CD4-positive, alpha-beta memory T cell (primary cell): ENCODE measurements at regions of chr19 and their contacts with region 1.

Region 1: GRCh38 chr19:3809881-3810707 is 23.9 kb upstream of the MATK start:
- DNase-seq: peak in 1 of 5 donors; percentile 19
- H3K4me3 ChIP-seq: no peak overlapping the region
- H3K4me3 Mint-ChIP-seq: no peak overlapping the region
- H3K27ac ChIP-seq: no peak overlapping the region
- H3K27ac Mint-ChIP-seq: peak overlapping the region in 2 of 7 donors; percentile 68 to 86
- H3K4me1 ChIP-seq: peaks cover 33% of the 10 kb centered on the region
- H3K4me1 Mint-ChIP-seq: peaks cover 26 to 50% (median 36%) of the 10 kb centered on the region in 4 donors
- H3K27me3 ChIP-seq: no peaks in the 10 kb centered on the region
- H3K27me3 Mint-ChIP-seq: no peaks in the 10 kb centered on the region

Region 2: DNA sequence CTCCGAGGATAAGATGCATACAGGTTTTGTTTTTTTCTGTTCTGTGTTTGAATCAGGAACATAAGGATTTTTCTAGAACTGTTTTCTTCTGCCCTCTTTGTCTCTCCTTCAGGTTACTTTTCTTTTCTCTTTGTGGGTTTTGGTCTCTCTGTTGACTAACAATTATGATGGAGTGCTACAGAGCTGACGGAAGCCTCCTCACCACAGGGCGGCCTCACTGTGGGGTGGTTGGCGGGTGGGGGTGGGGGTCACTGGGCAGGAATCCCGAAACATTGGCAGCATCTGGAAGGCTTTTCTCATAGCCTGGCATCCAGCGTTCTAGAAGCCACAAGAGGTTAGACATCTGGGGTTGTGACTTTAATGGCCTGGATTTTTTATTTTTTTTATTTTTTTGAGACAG is 12.0 kb before region 1 on chr19:
- CTCF ChIA-PET with region 1: interaction called, 4 read pairs
- POLR2A ChIA-PET with region 1: interaction called, 30 read pairs
- intact Hi-C with region 1: no loop called
- DNase-seq: peak; percentile 47 to 67 (median 57)
- H3K4me3 ChIP-seq: no peak overlapping the region
- H3K4me3 Mint-ChIP-seq: peak overlapping the region in 7 of 8 donors; percentile 48 to 83 (median 67)
- H3K27ac ChIP-seq: no peak overlapping the region
- H3K27ac Mint-ChIP-seq: peak overlapping the region; percentile 18 to 85 (median 59)
- H3K4me1 ChIP-seq: peaks cover 26% of the 10 kb centered on the region
- H3K4me1 Mint-ChIP-seq: peaks cover 18 to 36% (median 23%) of the 10 kb centered on the region in 4 donors
- H3K27me3 ChIP-seq: no peaks in the 10 kb centered on the region
- H3K27me3 Mint-ChIP-seq: no peaks in the 10 kb centered on the region

Region 3: GRCh38 chr19:3932931-3933810 is 123.1 kb after region 1 on chr19 and contains the start of gene NMRK2:
- CTCF ChIA-PET with region 1: no interaction called
- POLR2A ChIA-PET with region 1: no interaction called
- intact Hi-C with region 1: no loop called
- DNase-seq: no peak
- H3K4me3 ChIP-seq: no peak within 1 kb of the TSS
- H3K4me3 Mint-ChIP-seq: no peak within 1 kb of the TSS
- H3K27ac ChIP-seq: no peak within 1 kb of the TSS
- H3K27ac Mint-ChIP-seq: no peak within 1 kb of the TSS
- H3K4me1 ChIP-seq: no peaks in the 10 kb centered on the region
- H3K4me1 Mint-ChIP-seq: no peaks in the 10 kb centered on the region
- H3K27me3 ChIP-seq: no peaks in the 10 kb centered on the region
- H3K27me3 Mint-ChIP-seq: peaks cover 6 to 7% of the 10 kb centered on the region in 2 donors
- total RNA-seq, gene NMRK2: not detected